ENCODE measurements at regions of chr5 and their contacts with region 1.

Region 1: GRCh38 chr5:9218358-9218757 is 327.5 kb downstream of the SEMA5A start:
- DNase-seq: no peak
- H3K4me3 ChIP-seq: no peak overlapping the region
- H3K27ac ChIP-seq: no peak overlapping the region
- H3K4me1 ChIP-seq: no peaks in the 10 kb centered on the region
- H3K27me3 ChIP-seq: no peaks in the 10 kb centered on the region
- CTCF ChIP-seq: no peak

Region 2: GRCh38 chr5:8209500-8209899 is 1008.9 kb before region 1 on chr5:
- intact Hi-C with region 1: loop called (anchors 5 kb)
- DNase-seq: no peak
- H3K4me3 ChIP-seq: no peak overlapping the region
- H3K27ac ChIP-seq: no peak overlapping the region
- H3K4me1 ChIP-seq: no peaks in the 10 kb centered on the region
- H3K27me3 ChIP-seq: no peaks in the 10 kb centered on the region
- CTCF ChIP-seq: no peak

Measured in ascending aorta (tissue), 2 donors.